H1 (cell line): ENCODE measurements at regions of chr1 and their contacts with region 1.

Region 1: GRCh38 chr1:21334214-21335087 is 44.2 kb upstream of the ECE1 start:
- DNase-seq: peak in 1 of 2 experiments; percentile 89
- H3K4me3 ChIP-seq: peak overlapping the region in 3 of 4 experiments; percentile 19 to 45 (median 29); a peak in 6 of 8 replicates
- H3K27ac ChIP-seq: no peak overlapping the region
- H3K4me1 ChIP-seq: peaks cover 10 to 31% (median 20%) of the 10 kb centered on the region in 4 experiments
- H3K27me3 ChIP-seq: no peaks in the 10 kb centered on the region; a peak in 1 of 7 replicates
- CTCF ChIP-seq: peak; percentile 90 to 96 (median 93)
- EP300 ChIP-seq: no peak
- POLR2A ChIP-seq: no peak
- RAD21 ChIP-seq: peak; percentile 75 to 86

Region 2: DNA sequence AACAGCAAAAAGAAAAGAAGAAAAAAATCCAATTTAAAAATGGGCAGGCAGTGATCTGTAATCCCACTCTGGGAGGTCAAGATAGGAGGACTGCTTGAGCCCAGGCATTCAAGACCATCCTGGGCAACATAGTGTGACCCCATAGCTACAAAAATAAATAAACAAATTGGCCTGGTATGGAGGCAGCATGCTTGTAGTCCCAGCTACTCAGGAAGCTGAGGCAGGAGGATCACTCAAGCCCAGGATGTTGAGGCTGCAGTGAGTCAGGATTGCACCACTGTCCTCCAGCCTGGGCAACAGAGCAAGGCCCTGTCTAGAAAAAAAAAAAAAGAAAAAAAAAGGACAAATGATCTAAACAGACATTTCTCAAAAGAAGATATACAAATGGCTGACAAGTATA is 257.4 kb before region 1 on chr1:
- CTCF ChIA-PET with region 1: no interaction called
- POLR2A ChIA-PET with region 1: no interaction called
- DNase-seq: no peak
- H3K4me3 ChIP-seq: no peak overlapping the region
- H3K27ac ChIP-seq: no peak overlapping the region
- H3K4me1 ChIP-seq: no peaks in the 10 kb centered on the region
- H3K27me3 ChIP-seq: no peaks in the 10 kb centered on the region
- CTCF ChIP-seq: no peak
- EP300 ChIP-seq: no peak
- POLR2A ChIP-seq: no peak
- RAD21 ChIP-seq: no peak

Region 3: GRCh38 chr1:21216835-21217811 is 117.3 kb before region 1 on chr1:
- CTCF ChIA-PET with region 1: interaction called, 12 read pairs
- POLR2A ChIA-PET with region 1: no interaction called
- DNase-seq: peak in 1 of 2 experiments; percentile 88
- H3K4me3 ChIP-seq: no peak overlapping the region
- H3K27ac ChIP-seq: no peak overlapping the region
- H3K4me1 ChIP-seq: peaks cover 0 to 5% (median 5%) of the 10 kb centered on the region in 4 experiments; a peak in 5 of 7 replicates
- H3K27me3 ChIP-seq: no peaks in the 10 kb centered on the region
- CTCF ChIP-seq: peak; percentile 60 to 86 (median 80)
- EP300 ChIP-seq: no peak
- POLR2A ChIP-seq: no peak
- RAD21 ChIP-seq: peak; percentile 43 to 67; a peak in 3 of 4 replicates

Region 4: GRCh38 chr1:21294266-21294989 is 40.0 kb before region 1 on chr1:
- CTCF ChIA-PET with region 1: interaction called, 20 read pairs
- POLR2A ChIA-PET with region 1: no interaction called
- DNase-seq: no peak
- H3K4me3 ChIP-seq: no peak overlapping the region
- H3K27ac ChIP-seq: no peak overlapping the region
- H3K4me1 ChIP-seq: peaks cover 0 to 18% (median 14%) of the 10 kb centered on the region in 4 experiments; a peak in 6 of 7 replicates
- H3K27me3 ChIP-seq: no peaks in the 10 kb centered on the region
- CTCF ChIP-seq: no peak
- EP300 ChIP-seq: no peak
- POLR2A ChIP-seq: no peak
- RAD21 ChIP-seq: no peak

Region 5: DNA sequence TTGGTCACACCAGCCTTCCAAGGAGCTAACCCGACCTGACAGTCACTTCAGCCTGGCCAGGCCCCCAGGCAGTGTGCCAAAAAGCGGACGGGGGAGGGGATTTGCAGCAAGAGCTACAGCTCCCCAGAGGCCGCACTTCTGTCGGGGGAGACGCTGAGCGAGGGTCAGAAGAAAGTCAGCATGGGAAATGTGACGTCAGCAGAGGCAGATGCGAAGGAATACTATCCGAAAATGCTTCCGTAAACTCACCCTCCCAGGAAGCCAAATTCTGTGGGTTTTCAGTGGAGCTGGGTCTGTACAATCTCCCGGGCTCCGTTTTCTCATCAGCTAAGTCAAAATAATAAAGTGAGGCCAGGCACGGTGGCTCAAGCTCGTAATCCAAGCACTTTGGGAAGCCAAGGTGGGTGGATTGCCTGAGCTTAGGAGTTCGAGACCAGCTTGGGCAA is 15.7 kb before region 1 on chr1:
- CTCF ChIA-PET with region 1: interaction called, 168 read pairs
- POLR2A ChIA-PET with region 1: interaction called, 3 read pairs
- DNase-seq: no peak
- H3K4me3 ChIP-seq: no peak overlapping the region
- H3K27ac ChIP-seq: no peak overlapping the region
- H3K4me1 ChIP-seq: peaks cover 24 to 59% (median 34%) of the 10 kb centered on the region in 4 experiments
- H3K27me3 ChIP-seq: no peaks in the 10 kb centered on the region; a peak in 1 of 7 replicates
- CTCF ChIP-seq: no peak
- EP300 ChIP-seq: no peak
- POLR2A ChIP-seq: no peak
- RAD21 ChIP-seq: no peak

Region 6: DNA sequence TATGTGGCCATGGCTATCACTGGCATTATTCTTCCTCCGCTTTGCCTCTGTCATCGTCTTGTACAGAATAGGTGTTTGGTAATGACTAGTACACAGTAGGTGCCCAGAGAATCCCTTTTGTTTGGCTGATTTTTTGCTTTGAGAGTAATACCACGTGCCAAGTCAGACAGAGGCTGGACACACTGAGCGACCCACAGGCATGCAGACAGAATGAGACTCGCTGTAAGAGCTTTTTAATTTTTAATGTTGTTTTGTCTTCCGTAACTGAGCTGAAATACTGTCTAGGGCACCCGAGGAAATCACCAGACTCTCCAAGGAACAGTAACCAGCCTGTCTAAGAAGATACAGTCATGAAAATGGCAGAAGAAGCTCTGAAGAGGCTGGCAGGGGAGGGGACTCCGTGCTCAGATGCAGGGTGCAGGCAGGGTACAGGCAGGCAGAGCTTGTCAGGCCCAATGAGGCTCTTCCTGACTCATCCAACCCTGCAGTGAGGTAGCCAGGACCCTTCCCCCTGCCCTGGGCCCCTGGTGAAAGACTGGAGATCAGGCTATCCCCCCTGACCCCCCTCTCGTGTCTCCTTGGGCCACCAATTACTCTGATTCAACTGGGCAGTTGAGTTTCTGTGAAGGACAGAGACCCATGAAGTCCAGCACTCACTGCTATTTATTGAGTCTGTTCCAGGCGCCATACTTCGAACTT is 15.9 kb after region 1 on chr1:
- CTCF ChIA-PET with region 1: interaction called, 10 read pairs
- POLR2A ChIA-PET with region 1: interaction called, 3 read pairs
- DNase-seq: no peak
- H3K4me3 ChIP-seq: no peak overlapping the region
- H3K27ac ChIP-seq: no peak overlapping the region
- H3K4me1 ChIP-seq: peaks cover 2 to 6% (median 4%) of the 10 kb centered on the region in 4 experiments; a peak in 6 of 7 replicates
- H3K27me3 ChIP-seq: peaks cover 0 to 6% (median 1%) of the 10 kb centered on the region in 4 experiments; a peak in 4 of 7 replicates
- CTCF ChIP-seq: no peak
- EP300 ChIP-seq: no peak
- POLR2A ChIP-seq: no peak
- RAD21 ChIP-seq: no peak